CD4-positive, alpha-beta memory T cell (primary cell): ENCODE measurements at regions of chr12 and their contacts with region 1.

Region 1: DNA sequence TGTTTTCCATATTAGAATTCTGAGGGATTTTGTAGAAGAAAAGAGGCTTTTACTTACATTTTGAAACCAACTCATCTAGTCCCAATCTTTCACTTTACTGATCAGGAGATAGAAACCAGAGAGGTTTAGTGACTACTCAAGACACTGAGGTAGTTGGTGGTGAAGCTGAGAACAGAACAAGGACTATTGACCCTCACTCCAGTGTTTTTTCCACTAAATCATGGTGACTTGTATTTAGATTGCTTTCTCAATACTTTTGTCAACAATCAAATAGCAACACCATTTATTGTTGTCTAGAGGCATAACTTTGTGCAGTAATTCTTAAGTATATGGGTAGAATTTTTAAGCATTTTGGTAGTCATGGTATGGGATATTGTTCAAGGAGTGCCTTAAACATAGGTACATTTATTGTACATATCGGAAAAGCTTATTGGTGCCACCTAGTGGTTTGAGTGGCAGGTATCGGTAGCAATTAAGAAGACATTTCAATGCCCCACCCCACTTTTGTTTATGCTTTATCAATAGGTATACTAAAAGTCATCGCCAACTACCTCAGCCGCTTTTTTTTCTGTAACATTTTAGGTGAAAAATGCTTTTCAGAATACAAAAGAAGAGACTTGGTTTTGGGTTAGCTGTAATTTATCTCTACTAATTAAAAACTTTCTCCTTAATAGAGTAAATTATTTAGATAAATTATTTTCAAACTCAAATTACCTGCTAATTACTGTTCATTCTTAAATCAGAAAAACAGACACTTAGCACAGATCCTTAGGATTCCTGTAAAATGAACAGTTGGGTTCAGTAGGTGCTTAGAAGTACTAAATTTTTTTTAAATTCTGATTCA is 47.3 kb upstream of the PAWR start:
- DNase-seq: peak in 4 of 5 donors; percentile 19 to 29 (median 20)
- H3K4me3 ChIP-seq: no peak overlapping the region
- H3K4me3 Mint-ChIP-seq: no peak overlapping the region
- H3K27ac ChIP-seq: no peak overlapping the region
- H3K27ac Mint-ChIP-seq: no peak overlapping the region
- H3K4me1 ChIP-seq: no peaks in the 10 kb centered on the region
- H3K4me1 Mint-ChIP-seq: no peaks in the 10 kb centered on the region
- H3K27me3 ChIP-seq: peaks cover 5% of the 10 kb centered on the region
- H3K27me3 Mint-ChIP-seq: peaks cover 6 to 13% of the 10 kb centered on the region in 2 donors

Region 2: DNA sequence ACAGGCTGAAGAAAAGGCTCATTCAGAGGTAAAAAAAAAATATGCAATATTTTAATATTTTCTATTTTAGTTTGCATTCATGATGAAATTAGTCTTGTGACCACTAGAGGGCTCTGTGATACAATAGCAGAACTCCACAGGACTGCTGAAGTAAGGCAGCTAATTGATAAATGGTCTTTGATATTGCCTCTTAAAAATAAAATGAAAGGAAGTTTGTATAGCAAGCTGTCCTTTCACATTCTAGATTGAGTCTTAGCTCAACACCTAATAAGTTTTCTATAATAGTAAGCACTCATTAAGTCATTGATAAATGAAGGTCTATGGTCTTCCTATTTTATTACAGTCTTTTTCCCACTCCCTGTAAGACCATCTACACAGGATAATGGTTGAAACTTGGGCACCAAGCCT is 1591.7 kb before region 1 on chr12:
- CTCF ChIA-PET with region 1: no interaction called
- POLR2A ChIA-PET with region 1: no interaction called
- intact Hi-C with region 1: loop called (anchors 5 kb)
- DNase-seq: peak in 1 of 5 donors; percentile 2
- H3K4me3 ChIP-seq: no peak overlapping the region
- H3K4me3 Mint-ChIP-seq: no peak overlapping the region
- H3K27ac ChIP-seq: no peak overlapping the region
- H3K27ac Mint-ChIP-seq: no peak overlapping the region
- H3K4me1 ChIP-seq: no peaks in the 10 kb centered on the region
- H3K4me1 Mint-ChIP-seq: no peaks in the 10 kb centered on the region
- H3K27me3 ChIP-seq: no peaks in the 10 kb centered on the region
- H3K27me3 Mint-ChIP-seq: no peaks in the 10 kb centered on the region

Region 3: GRCh38 chr12:79547735-79548609 is 190.1 kb before region 1 on chr12:
- CTCF ChIA-PET with region 1: interaction called, 4 read pairs
- POLR2A ChIA-PET with region 1: no interaction called
- intact Hi-C with region 1: loop called (anchors 1 kb)
- DNase-seq: peak in 2 of 5 donors; percentile 5 to 6
- H3K4me3 ChIP-seq: no peak overlapping the region
- H3K4me3 Mint-ChIP-seq: no peak overlapping the region
- H3K27ac ChIP-seq: no peak overlapping the region
- H3K27ac Mint-ChIP-seq: no peak overlapping the region
- H3K4me1 ChIP-seq: no peaks in the 10 kb centered on the region
- H3K4me1 Mint-ChIP-seq: no peaks in the 10 kb centered on the region
- H3K27me3 ChIP-seq: no peaks in the 10 kb centered on the region
- H3K27me3 Mint-ChIP-seq: peaks cover 0 to 3% of the 10 kb centered on the region in 2 donors

Region 4: GRCh38 chr12:79560225-79560889 is 177.7 kb before region 1 on chr12:
- CTCF ChIA-PET with region 1: no interaction called
- POLR2A ChIA-PET with region 1: no interaction called
- intact Hi-C with region 1: no loop called
- DNase-seq: no peak
- H3K4me3 ChIP-seq: no peak overlapping the region
- H3K4me3 Mint-ChIP-seq: no peak overlapping the region
- H3K27ac ChIP-seq: no peak overlapping the region
- H3K27ac Mint-ChIP-seq: no peak overlapping the region
- H3K4me1 ChIP-seq: no peaks in the 10 kb centered on the region
- H3K4me1 Mint-ChIP-seq: no peaks in the 10 kb centered on the region
- H3K27me3 ChIP-seq: no peaks in the 10 kb centered on the region
- H3K27me3 Mint-ChIP-seq: no peaks in the 10 kb centered on the region

Region 5: GRCh38 chr12:79634957-79635471 is 103.1 kb before region 1 on chr12:
- CTCF ChIA-PET with region 1: no interaction called
- POLR2A ChIA-PET with region 1: no interaction called
- intact Hi-C with region 1: no loop called
- DNase-seq: no peak
- H3K4me3 ChIP-seq: no peak overlapping the region
- H3K4me3 Mint-ChIP-seq: no peak overlapping the region
- H3K27ac ChIP-seq: no peak overlapping the region
- H3K27ac Mint-ChIP-seq: no peak overlapping the region
- H3K4me1 ChIP-seq: no peaks in the 10 kb centered on the region
- H3K4me1 Mint-ChIP-seq: no peaks in the 10 kb centered on the region
- H3K27me3 ChIP-seq: no peaks in the 10 kb centered on the region
- H3K27me3 Mint-ChIP-seq: no peaks in the 10 kb centered on the region